Ovary (tissue), 10 donors: ENCODE measurements at regions of chr11 and their contacts with region 1.

Region 1: DNA sequence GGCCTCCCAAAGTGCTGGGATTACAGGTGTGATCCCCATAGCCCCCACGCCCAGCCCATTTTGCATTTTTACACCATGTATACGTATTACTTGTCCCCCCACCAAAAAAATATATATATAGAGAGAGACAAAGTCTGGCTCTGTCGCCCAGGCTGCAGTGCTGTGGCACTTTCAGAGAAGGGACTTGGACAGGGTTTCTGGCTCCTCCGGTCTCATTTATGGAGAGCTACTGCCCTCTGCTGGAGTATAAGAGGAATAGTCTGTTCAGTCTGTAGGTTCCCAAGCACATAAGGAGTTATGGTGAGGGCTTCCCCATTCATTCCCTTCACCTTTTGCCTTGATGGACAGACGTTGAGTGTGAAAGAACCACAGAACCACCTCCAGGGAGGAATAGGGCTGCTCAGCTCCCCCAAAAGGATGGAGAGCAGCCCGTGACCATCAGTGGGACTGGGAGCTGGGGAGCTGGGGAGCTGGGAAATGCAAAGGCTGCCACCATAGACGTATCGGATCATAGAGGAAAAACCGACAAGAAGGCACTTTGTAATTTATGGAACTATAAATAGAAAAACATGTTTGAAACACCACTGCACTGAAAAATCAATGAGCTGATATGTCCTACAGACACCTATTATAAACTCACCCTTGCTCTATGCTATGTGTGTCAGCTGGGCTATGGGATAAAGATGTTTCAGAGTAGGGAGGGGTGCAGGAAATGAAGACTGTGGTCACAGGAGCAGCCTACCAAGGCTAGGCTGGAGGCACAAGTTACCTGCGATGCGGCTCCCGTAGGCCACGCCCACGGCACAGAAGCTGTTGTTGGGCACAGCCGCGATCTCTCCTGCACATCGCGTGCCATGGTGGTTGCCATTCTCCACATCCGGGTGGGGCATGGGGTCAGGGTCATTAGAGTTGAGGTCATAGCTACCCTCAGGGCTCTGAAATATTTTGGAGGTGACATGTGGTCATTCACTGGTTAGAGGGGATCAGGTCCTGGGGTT is 5.2 kb downstream of the PCSK7 start:
- DNase-seq: peak in 2 of 5 donors; percentile 51 to 53
- H3K4me3 ChIP-seq: no peak overlapping the region
- H3K27ac ChIP-seq: no peak overlapping the region
- H3K4me1 ChIP-seq: peaks cover 4% of the 10 kb centered on the region
- H3K27me3 ChIP-seq: no peaks in the 10 kb centered on the region
- CTCF ChIP-seq: peak; percentile 54 to 84 (median 80)
- EP300 ChIP-seq: no peak
- POLR2A ChIP-seq: no peak

Region 2: GRCh38 chr11:116732271-116733042 is 494.2 kb before region 1 on chr11:
- intact Hi-C with region 1: loop called in 1 of 4 experiments (anchors 5 kb)
- DNase-seq: peak; percentile 39 to 71 (median 62)
- H3K4me3 ChIP-seq: no peak overlapping the region
- H3K27ac ChIP-seq: no peak overlapping the region
- H3K4me1 ChIP-seq: no peaks in the 10 kb centered on the region
- H3K27me3 ChIP-seq: no peaks in the 10 kb centered on the region
- CTCF ChIP-seq: peak; percentile 21 to 48 (median 44)
- EP300 ChIP-seq: no peak
- POLR2A ChIP-seq: no peak

Region 3: GRCh38 chr11:116853461-116854073 is 373.1 kb before region 1 on chr11:
- intact Hi-C with region 1: loop called in 1 of 4 experiments (anchors 10 kb)
- DNase-seq: no peak
- H3K4me3 ChIP-seq: no peak overlapping the region
- H3K27ac ChIP-seq: no peak overlapping the region
- H3K4me1 ChIP-seq: peaks cover 12% of the 10 kb centered on the region
- H3K27me3 ChIP-seq: no peaks in the 10 kb centered on the region
- CTCF ChIP-seq: no peak
- EP300 ChIP-seq: no peak
- POLR2A ChIP-seq: no peak

Region 4: DNA sequence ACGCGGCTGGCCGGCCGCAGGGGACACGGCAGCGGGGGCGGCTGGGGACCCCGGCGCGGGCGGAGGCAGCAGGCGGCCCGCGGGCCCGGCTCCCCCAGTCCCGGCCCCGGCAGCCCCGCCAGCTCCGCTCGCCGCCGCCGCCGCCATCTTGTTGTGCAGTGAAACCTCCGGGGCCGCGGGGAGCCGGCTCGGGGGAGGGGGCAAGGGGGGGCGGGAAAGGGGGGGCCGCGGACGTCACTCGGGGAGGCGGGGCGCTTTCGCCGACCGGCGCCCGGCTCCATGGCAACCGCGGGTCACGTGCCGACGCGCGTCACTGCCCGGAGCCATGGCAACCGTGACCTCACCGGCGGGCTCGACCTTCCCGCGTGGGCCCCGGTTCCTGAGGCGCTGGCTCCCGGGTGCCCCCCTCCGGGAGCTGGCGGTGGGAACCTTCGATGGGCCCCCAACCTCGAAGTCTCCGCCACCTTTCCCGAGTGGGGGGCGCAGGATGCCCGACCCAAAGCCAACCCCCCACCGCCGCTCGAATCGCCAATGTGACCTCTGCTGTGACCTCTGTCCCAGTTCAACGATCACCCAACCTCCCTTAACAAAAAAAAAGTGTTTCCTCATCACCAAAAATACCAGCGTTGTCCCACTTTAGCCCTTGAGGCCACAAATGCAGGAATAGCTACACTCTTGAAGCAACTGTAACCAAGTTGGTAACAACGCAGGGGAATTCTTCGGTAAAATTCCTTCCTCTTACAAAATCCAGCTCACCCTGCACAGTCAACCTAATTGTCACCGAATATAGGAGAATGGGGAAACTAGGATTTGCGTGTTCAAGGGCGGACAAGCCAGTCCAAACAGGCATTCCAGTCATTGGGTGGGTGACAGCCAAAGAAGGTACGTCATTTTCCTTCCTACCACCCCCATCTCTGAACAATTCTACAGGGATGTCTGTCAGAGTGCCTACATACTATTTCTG is 128.1 kb before region 1 on chr11 and contains the start of gene SIK3:
- intact Hi-C with region 1: loop called in 2 of 4 experiments (anchors 5 to 10 kb)
- DNase-seq: peak; percentile 94 to 98 (median 97)
- H3K4me3 ChIP-seq: peak within 1 kb of the TSS; percentile 81
- H3K27ac ChIP-seq: peak within 1 kb of the TSS; percentile 88 to 98
- H3K4me1 ChIP-seq: peaks cover 17% of the 10 kb centered on the region
- H3K27me3 ChIP-seq: no peaks in the 10 kb centered on the region
- CTCF ChIP-seq: peak in 2 of 3 donors; percentile 58 to 69
- EP300 ChIP-seq: peak; percentile 86
- POLR2A ChIP-seq: peak; percentile 76
- total RNA-seq, gene SIK3: 33.3 to 134 (median 56.2) TPM

Region 5: DNA sequence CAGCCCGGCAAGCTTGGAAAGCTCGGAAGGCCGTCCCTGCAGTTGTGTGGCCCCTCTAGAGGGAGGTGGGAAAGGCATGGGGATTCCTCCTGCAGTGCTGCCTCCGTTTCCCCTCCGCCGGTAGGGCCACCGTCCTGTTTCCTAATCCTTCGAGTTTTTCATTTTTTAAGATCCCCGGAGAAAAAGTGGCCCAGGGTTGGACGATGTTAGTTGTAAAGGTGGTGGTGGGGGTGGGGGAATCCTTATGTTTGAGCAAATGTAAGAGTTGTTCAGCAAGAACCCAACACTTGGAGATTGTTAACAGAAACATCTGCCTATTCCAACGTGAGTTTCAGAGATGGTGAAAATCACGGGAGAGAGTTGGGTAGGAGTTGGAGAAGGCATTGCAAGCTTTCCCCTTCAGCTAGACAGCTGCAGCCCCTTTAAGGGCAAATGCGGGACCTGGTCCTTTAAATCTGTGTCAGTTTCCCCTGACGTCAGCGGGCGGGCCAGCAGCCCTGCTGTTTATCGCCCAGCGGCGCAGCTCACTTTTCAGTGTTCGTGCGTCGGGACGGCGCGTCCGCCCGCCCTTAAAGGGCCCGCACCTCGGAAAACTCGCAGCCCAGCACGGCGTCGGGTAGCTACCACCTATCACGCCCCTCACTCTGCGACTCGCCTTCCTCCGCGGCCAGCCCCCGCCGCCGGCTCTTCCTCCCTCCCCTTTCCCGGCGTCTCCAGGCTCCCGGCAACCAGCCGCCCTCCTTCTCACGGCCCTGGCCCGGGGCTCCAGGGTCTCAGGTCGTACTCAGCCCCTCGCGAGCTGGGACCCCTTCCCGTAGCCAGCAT is 48.3 kb before region 1 on chr11 and contains the start of gene SIDT2:
- intact Hi-C with region 1: loop called in 3 of 4 experiments (anchors 2 to 10 kb)
- DNase-seq: peak; percentile 93 to 96 (median 95)
- H3K4me3 ChIP-seq: peak within 1 kb of the TSS; percentile 65
- H3K27ac ChIP-seq: peak within 1 kb of the TSS; percentile 79 to 88
- H3K4me1 ChIP-seq: peaks cover 12% of the 10 kb centered on the region
- H3K27me3 ChIP-seq: no peaks in the 10 kb centered on the region
- CTCF ChIP-seq: peak in 2 of 3 donors; percentile 17 to 40
- EP300 ChIP-seq: no peak
- POLR2A ChIP-seq: peak; percentile 94
- total RNA-seq, gene SIDT2: 36.5 to 141 (median 73.7) TPM

Region 6: DNA sequence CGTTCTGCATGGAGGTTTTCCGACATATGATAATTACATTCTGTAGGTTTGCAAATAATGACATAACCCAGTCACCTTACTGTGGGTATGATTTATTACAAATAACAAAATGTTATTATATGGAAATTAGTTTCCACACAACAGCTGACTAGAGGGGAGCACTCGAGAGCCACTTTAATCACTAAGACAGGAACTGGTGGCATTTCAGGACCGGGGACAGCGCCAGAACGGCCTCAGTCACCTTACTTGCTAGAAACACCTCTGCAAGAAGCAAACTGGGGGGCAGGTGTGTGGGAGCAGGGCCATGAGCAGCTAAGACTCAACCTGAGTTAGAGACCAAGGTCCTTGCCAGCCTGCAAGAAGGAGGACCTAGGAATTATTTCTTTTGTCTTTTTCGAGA is 370.4 kb after region 1 on chr11:
- intact Hi-C with region 1: no loop called
- DNase-seq: peak in 1 of 5 donors; percentile 42
- H3K4me3 ChIP-seq: no peak overlapping the region
- H3K27ac ChIP-seq: no peak overlapping the region
- H3K4me1 ChIP-seq: no peaks in the 10 kb centered on the region
- H3K27me3 ChIP-seq: no peaks in the 10 kb centered on the region
- CTCF ChIP-seq: no peak
- EP300 ChIP-seq: no peak
- POLR2A ChIP-seq: no peak